Dendritic cell treated with granulocyte-macrophage colony-stimulating factor and Interleukin-4, amounts not matched to agents 40 ng/mL and 50 ng/mL, for 4 days (primary cell): ENCODE measurements at regions of chr13 and their contacts with region 1.

Region 1: DNA sequence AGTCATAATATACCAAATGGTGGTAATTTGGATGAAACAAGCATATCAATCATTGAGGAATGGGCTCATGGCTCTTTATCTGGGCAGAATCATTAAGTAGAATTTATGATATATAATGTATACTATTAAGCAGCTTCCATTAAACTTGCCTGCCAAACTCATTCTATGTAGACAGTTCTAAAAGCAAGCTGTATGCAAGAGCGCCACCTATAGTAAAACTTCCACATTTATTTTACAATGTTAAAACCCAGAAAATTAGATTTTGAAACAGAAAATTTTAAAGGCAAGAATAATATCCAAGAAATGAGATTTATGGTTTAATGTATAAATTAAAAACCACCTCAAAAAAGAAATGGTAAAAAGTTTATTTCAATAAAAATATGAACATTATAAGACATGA is 161.5 kb downstream of the MZT1 start:
- H3K4me3 Mint-ChIP-seq: no peak overlapping the region
- H3K27ac Mint-ChIP-seq: no peak overlapping the region
- H3K4me1 Mint-ChIP-seq: peaks cover 9% of the 10 kb centered on the region
- H3K27me3 Mint-ChIP-seq: no peaks in the 10 kb centered on the region

Region 2: GRCh38 chr13:70960841-70961443 is 1605.0 kb before region 1 on chr13:
- intact Hi-C with region 1: loop called (anchors 5 kb)
- H3K4me3 Mint-ChIP-seq: no peak overlapping the region
- H3K27ac Mint-ChIP-seq: no peak overlapping the region
- H3K4me1 Mint-ChIP-seq: no peaks in the 10 kb centered on the region
- H3K27me3 Mint-ChIP-seq: no peaks in the 10 kb centered on the region